ENCODE measurements at regions of chr9 and their contacts with region 1.

Region 1: DNA sequence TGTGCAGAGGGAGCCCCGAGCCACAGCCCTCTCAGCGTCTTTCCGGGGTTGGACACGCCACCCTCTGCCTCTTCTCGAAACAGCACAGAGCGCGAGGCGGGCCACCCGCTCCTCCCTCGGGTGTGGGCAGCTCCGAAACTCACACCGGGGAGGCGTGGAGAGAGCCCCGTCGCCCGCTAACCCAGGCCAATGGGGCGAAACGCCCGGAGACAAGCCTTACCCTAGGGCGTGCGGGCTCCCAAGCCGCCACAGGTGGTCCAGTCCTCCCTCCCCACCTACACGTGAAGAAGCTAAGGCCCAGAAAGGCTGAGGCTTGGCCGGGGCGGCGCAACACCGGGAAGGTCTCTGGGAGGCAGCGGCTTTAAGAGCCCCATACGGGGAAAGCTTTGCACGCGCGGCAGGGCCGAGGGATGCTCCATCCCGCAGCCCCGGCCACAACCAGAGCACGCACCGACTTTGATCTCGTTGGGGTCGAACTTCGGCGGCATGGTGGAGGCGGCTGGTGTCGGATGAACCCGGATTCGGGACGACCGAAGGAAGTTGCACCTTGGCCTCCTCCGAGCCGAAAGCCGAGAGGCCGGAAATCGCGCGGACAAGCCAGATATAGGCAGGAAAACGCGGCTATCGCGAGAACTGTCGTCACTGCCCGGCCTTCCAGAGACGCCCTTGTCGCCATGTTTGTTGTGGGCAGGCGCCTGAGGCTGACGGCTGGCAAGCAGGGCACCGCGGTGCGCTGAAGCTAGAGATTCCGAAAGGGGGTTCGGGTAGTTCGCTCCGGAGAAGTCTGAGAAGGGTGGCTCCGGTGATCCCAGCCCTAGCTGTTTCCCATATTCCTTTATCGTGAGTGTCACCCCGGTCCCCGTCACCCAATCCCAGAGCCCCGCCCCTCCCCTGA is at the starts of genes LRSAM1 and RPL12:
- DNase-seq: peak; percentile 95 to 100 (median 98)
- ATAC-seq: peak; percentile 85
- H3K4me3 ChIP-seq: peak within 1 kb of the TSS; percentile 75
- H3K4me3 Mint-ChIP-seq: peak within 1 kb of the TSS; percentile 83 to 98 (median 94)
- H3K27ac ChIP-seq: peak within 1 kb of the TSS; percentile 86
- H3K27ac Mint-ChIP-seq: peak within 1 kb of the TSS; percentile 76 to 97 (median 94)
- H3K4me1 ChIP-seq: peaks cover 21 to 25% of the 10 kb centered on the region in 2 donors
- H3K4me1 Mint-ChIP-seq: peaks cover 21 to 45% (median 40%) of the 10 kb centered on the region in 7 donors
- H3K27me3 ChIP-seq: no peaks in the 10 kb centered on the region
- H3K27me3 Mint-ChIP-seq: no peaks in the 10 kb centered on the region
- total RNA-seq, gene LRSAM1: 15.1 to 23.3 (median 19.8) TPM
- total RNA-seq, gene RPL12: 1,005 to 1,932 (median 1,675) TPM

Region 2: DNA sequence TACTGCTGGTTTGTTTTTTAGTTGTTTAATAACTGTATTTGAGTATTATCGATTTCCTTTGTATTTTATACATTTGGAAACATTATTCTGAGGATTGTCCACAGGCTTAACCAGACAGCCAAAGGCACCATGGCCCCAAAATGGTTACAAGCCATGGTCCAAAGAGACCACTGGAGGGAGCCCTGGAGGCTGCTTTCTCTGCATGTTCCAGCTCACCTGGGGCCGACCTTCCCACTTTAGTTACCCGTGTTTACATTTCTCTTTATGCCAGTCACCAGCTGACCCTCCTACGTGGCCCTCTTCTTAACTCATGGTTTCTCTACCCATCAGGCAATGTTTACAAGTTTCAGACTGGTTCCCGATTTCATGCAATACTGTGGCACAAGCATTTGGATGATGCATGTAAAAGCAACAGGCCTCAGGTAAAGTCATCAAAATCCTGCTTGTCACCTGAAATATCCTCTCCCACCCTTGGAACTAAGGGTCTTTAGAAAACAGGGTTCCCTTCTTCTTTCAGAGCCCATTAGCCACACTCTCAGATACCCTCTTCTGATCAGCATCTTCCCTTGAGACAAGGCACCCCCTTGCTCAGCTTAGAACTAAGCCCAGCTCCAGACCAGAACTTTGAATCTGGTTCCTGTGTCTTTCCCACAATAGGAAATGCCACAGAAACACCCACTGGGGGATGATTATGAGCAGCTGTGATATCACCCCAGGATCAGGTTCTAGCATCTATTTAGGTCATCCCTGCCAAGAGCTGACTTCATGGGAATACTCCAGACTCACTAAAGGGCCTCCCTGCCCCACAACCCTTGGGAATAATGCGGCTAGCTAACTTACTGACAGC is 236.4 kb before region 1 on chr9:
- CTCF ChIA-PET with region 1: interaction called, 4 read pairs
- POLR2A ChIA-PET with region 1: interaction called, 9 read pairs
- intact Hi-C with region 1: loop called (anchors 1 to 2 kb)
- DNase-seq: peak in 8 of 9 donors; percentile 37 to 62 (median 48)
- ATAC-seq: peak; percentile 84
- H3K4me3 ChIP-seq: no peak overlapping the region
- H3K4me3 Mint-ChIP-seq: no peak overlapping the region
- H3K27ac ChIP-seq: no peak overlapping the region
- H3K27ac Mint-ChIP-seq: no peak overlapping the region
- H3K4me1 ChIP-seq: no peaks in the 10 kb centered on the region
- H3K4me1 Mint-ChIP-seq: peaks cover 0 to 5% (median 0%) of the 10 kb centered on the region in 7 donors
- H3K27me3 ChIP-seq: no peaks in the 10 kb centered on the region
- H3K27me3 Mint-ChIP-seq: peaks cover 0 to 16% (median 4%) of the 10 kb centered on the region in 5 donors

Region 3: DNA sequence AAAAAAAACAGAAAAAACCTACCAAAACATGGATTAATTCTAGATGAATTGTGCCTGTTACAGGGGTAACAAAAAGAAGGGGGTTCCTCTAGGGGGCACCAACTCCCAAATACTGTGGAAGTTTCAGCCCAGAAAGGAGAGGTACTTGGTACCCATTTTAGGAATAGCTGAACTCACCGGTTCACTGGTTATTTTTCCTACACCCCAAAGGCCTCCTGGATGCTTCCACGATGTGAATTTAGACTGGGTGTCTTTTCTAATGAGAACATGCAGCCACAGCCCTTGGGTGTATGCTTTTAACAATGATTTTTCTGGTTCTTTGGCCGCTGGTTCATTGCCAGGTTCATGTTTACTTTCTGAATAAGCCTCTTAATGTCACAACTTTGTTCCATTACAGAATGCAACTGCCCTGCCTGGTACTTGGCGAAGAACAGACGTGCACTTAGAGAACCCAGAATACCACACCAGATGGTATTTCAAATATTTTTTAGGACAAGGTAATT is 139.8 kb before region 1 on chr9:
- CTCF ChIA-PET with region 1: no interaction called
- POLR2A ChIA-PET with region 1: no interaction called
- intact Hi-C with region 1: loop called in 1 of 2 experiments (anchors 1 kb)
- DNase-seq: peak in 5 of 9 donors; percentile 11 to 42 (median 26)
- ATAC-seq: no peak
- H3K4me3 ChIP-seq: no peak overlapping the region
- H3K4me3 Mint-ChIP-seq: no peak overlapping the region
- H3K27ac ChIP-seq: no peak overlapping the region
- H3K27ac Mint-ChIP-seq: no peak overlapping the region
- H3K4me1 ChIP-seq: no peaks in the 10 kb centered on the region
- H3K4me1 Mint-ChIP-seq: no peaks in the 10 kb centered on the region
- H3K27me3 ChIP-seq: peaks cover 0 to 4% of the 10 kb centered on the region in 2 donors
- H3K27me3 Mint-ChIP-seq: peaks cover 15 to 32% (median 31%) of the 10 kb centered on the region in 5 donors

Region 4: GRCh38 chr9:127423934-127424675 is 27.0 kb before region 1 on chr9 and contains the start of gene ZNF79:
- CTCF ChIA-PET with region 1: interaction called, 3 read pairs
- POLR2A ChIA-PET with region 1: interaction called, 28 read pairs
- intact Hi-C with region 1: loop called (anchors 1 kb)
- DNase-seq: peak; percentile 80 to 96 (median 84)
- ATAC-seq: peak; percentile 94
- H3K4me3 ChIP-seq: peak within 1 kb of the TSS; percentile 96
- H3K4me3 Mint-ChIP-seq: peak within 1 kb of the TSS; percentile 93 to 99 (median 98)
- H3K27ac ChIP-seq: peak within 1 kb of the TSS; percentile 83
- H3K27ac Mint-ChIP-seq: peak within 1 kb of the TSS; percentile 91 to 96 (median 94)
- H3K4me1 ChIP-seq: peaks cover 12 to 27% of the 10 kb centered on the region in 2 donors
- H3K4me1 Mint-ChIP-seq: peaks cover 39 to 54% (median 50%) of the 10 kb centered on the region in 7 donors
- H3K27me3 ChIP-seq: no peaks in the 10 kb centered on the region
- H3K27me3 Mint-ChIP-seq: no peaks in the 10 kb centered on the region
- total RNA-seq, gene ZNF79: 4.8 to 17.8 (median 13.6) TPM

Region 5: DNA sequence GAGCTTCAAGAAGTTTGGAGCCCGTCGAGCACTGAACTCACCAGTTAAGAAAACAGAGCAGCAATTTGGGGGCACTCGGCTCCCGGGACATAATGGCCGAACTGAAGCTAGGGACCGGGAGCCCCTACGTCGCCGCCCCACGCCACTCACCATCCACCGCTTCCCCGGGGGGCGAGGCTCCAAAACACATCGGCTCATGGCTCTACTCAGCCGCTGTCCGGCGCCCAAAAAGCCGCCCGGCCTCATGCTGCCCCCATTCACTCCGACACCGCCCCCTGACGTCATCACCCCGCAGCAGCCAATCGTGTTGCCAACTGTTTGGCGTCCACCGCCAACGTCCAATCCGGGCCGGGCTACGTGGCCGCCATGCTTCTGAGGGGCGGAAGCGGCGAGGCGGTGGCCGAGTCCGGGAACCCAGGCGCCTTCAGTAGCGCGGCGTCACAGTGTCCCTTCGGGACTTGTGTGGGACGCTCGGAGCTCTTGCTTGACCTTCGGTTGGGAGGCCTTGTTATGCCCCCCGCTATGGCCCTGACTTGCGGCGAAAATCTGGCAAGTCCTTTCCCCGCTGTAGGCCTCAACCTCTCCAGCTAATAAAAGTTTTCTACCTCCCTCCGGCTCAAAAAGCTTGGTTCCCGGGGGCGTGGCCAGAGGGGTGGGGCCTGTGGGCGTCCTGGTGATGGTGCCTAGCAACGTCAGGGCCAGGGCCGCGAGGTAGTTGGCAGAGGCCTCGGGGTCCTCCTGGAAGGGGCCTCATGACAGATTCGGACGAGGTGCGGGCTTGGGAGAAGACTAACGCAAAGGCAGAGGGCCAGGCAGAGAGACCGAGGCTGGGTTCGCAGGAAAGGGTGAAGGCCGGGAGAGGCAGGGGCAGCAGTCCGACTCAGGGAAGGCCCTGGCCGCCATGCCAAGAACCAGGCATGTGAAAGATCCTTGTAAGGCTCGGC is 264.6 kb after region 1 on chr9 and contains the starts of genes PTRH1 and TTC16:
- CTCF ChIA-PET with region 1: no interaction called
- POLR2A ChIA-PET with region 1: interaction called, 3 read pairs
- intact Hi-C with region 1: loop called (anchors 1 kb)
- DNase-seq: peak; percentile 91 to 98 (median 96)
- ATAC-seq: peak; percentile 96
- H3K4me3 ChIP-seq: peak within 1 kb of the TSS; percentile 85
- H3K4me3 Mint-ChIP-seq: peak within 1 kb of the TSS; percentile 93 to 100 (median 98)
- H3K27ac ChIP-seq: peak within 1 kb of the TSS; percentile 89
- H3K27ac Mint-ChIP-seq: peak within 1 kb of the TSS; percentile 86 to 99 (median 97)
- H3K4me1 ChIP-seq: peaks cover 31 to 32% of the 10 kb centered on the region in 2 donors
- H3K4me1 Mint-ChIP-seq: peaks cover 28 to 47% (median 30%) of the 10 kb centered on the region in 7 donors
- H3K27me3 ChIP-seq: no peaks in the 10 kb centered on the region
- H3K27me3 Mint-ChIP-seq: no peaks in the 10 kb centered on the region
- total RNA-seq, gene PTRH1: 7.8 to 9.5 (median 8.6) TPM
- total RNA-seq, gene TTC16: 0.29 to 9.9 (median 4.6) TPM

Region 6: GRCh38 chr9:128275996-128276573 is 825.0 kb after region 1 on chr9 and contains the starts of genes GOLGA2 and SWI5:
- CTCF ChIA-PET with region 1: no interaction called
- POLR2A ChIA-PET with region 1: no interaction called
- intact Hi-C with region 1: loop called in 1 of 2 experiments (anchors 5 kb)
- DNase-seq: peak; percentile 98 to 100 (median 100)
- ATAC-seq: peak; percentile 98
- H3K4me3 ChIP-seq: peak within 1 kb of the TSS; percentile 95
- H3K4me3 Mint-ChIP-seq: peak within 1 kb of the TSS; percentile 94 to 98 (median 96)
- H3K27ac ChIP-seq: peak within 1 kb of the TSS; percentile 90
- H3K27ac Mint-ChIP-seq: peak within 1 kb of the TSS; percentile 94 to 98 (median 97)
- H3K4me1 ChIP-seq: peaks cover 16 to 21% of the 10 kb centered on the region in 2 donors
- H3K4me1 Mint-ChIP-seq: peaks cover 24 to 51% (median 46%) of the 10 kb centered on the region in 7 donors
- H3K27me3 ChIP-seq: no peaks in the 10 kb centered on the region
- H3K27me3 Mint-ChIP-seq: peaks cover 0 to 7% (median 0%) of the 10 kb centered on the region in 5 donors
- total RNA-seq, gene GOLGA2: 56.5 to 76.6 (median 70.6) TPM
- total RNA-seq, gene SWI5: 8.7 to 17.4 (median 9.8) TPM

Measured in naive thymus-derived CD4-positive, alpha-beta T cell (primary cell).